ENCODE measurements at regions of chr2 and their contacts with region 1.

Region 1: GRCh38 chr2:46650556-46651001 is 171.2 kb downstream of the TMEM247 start:
- DNase-seq: peak; percentile 41 to 86 (median 70)
- ATAC-seq: peak; percentile 84
- H3K4me3 ChIP-seq: no peak overlapping the region
- H3K4me3 Mint-ChIP-seq: no peak overlapping the region
- H3K27ac ChIP-seq: no peak overlapping the region
- H3K27ac Mint-ChIP-seq: no peak overlapping the region
- H3K4me1 ChIP-seq: no peaks in the 10 kb centered on the region
- H3K4me1 Mint-ChIP-seq: no peaks in the 10 kb centered on the region
- H3K27me3 ChIP-seq: no peaks in the 10 kb centered on the region
- H3K27me3 Mint-ChIP-seq: no peaks in the 10 kb centered on the region
- CTCF ChIP-seq: peak; percentile 94

Region 2: DNA sequence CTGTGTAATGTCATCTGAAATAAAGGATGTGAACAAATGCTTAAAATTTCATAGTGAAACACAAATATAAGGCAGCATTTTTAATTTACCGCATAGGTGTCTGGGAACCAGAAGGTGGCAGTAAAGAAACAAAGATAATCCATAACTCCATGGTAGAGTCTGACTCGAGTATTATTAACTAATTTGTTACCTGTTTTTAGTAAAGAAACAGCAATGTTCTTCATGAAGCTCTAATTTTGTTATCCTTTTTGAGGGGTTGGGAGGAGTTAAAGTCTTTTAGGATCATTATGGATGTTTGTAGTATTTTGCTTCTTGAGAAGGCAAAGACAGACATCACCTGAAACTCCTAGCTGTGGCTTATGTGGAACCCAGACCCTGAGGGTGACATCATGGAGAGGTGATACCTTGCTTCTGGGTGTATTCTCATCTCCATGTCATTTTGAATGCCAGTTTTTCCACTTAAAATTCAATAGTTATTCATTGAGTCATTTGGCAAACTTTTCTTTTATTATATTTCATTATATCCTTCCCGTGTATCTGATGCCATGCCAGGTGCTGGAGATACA is 639.6 kb before region 1 on chr2:
- CTCF ChIA-PET with region 1: interaction called, 3 read pairs
- POLR2A ChIA-PET with region 1: no interaction called
- intact Hi-C with region 1: loop called in 1 of 2 experiments (anchors 5 kb)
- DNase-seq: peak in 2 of 9 experiments; percentile 28 to 50
- ATAC-seq: no peak
- H3K4me3 ChIP-seq: no peak overlapping the region
- H3K4me3 Mint-ChIP-seq: no peak overlapping the region
- H3K27ac ChIP-seq: no peak overlapping the region
- H3K27ac Mint-ChIP-seq: no peak overlapping the region
- H3K4me1 ChIP-seq: no peaks in the 10 kb centered on the region
- H3K4me1 Mint-ChIP-seq: no peaks in the 10 kb centered on the region
- H3K27me3 ChIP-seq: no peaks in the 10 kb centered on the region
- H3K27me3 Mint-ChIP-seq: no peaks in the 10 kb centered on the region
- CTCF ChIP-seq: peak; percentile 42

Region 3: GRCh38 chr2:46451131-46451711 is 199.4 kb before region 1 on chr2:
- CTCF ChIA-PET with region 1: interaction called, 10 read pairs
- POLR2A ChIA-PET with region 1: no interaction called
- intact Hi-C with region 1: no loop called
- DNase-seq: no peak
- ATAC-seq: no peak
- H3K4me3 ChIP-seq: no peak overlapping the region
- H3K4me3 Mint-ChIP-seq: no peak overlapping the region
- H3K27ac ChIP-seq: no peak overlapping the region
- H3K27ac Mint-ChIP-seq: no peak overlapping the region
- H3K4me1 ChIP-seq: no peaks in the 10 kb centered on the region
- H3K4me1 Mint-ChIP-seq: no peaks in the 10 kb centered on the region
- H3K27me3 ChIP-seq: no peaks in the 10 kb centered on the region
- H3K27me3 Mint-ChIP-seq: no peaks in the 10 kb centered on the region
- CTCF ChIP-seq: no peak

Region 4: GRCh38 chr2:46601328-46601963 is 49.1 kb before region 1 on chr2:
- CTCF ChIA-PET with region 1: interaction called, 4 read pairs
- POLR2A ChIA-PET with region 1: no interaction called
- intact Hi-C with region 1: loop called in 1 of 2 experiments (anchors 5 kb)
- DNase-seq: peak in 2 of 9 experiments; percentile 16 to 35
- ATAC-seq: no peak
- H3K4me3 ChIP-seq: no peak overlapping the region
- H3K4me3 Mint-ChIP-seq: no peak overlapping the region
- H3K27ac ChIP-seq: no peak overlapping the region
- H3K27ac Mint-ChIP-seq: no peak overlapping the region
- H3K4me1 ChIP-seq: no peaks in the 10 kb centered on the region
- H3K4me1 Mint-ChIP-seq: no peaks in the 10 kb centered on the region
- H3K27me3 ChIP-seq: no peaks in the 10 kb centered on the region
- H3K27me3 Mint-ChIP-seq: no peaks in the 10 kb centered on the region
- CTCF ChIP-seq: peak; percentile 56

Region 5: GRCh38 chr2:46769809-46770208 is 119.2 kb after region 1 on chr2:
- CTCF ChIA-PET with region 1: no interaction called
- POLR2A ChIA-PET with region 1: no interaction called
- intact Hi-C with region 1: no loop called
- DNase-seq: no peak
- ATAC-seq: no peak
- H3K4me3 ChIP-seq: no peak overlapping the region
- H3K4me3 Mint-ChIP-seq: no peak overlapping the region
- H3K27ac ChIP-seq: no peak overlapping the region
- H3K27ac Mint-ChIP-seq: no peak overlapping the region
- H3K4me1 ChIP-seq: no peaks in the 10 kb centered on the region
- H3K4me1 Mint-ChIP-seq: no peaks in the 10 kb centered on the region
- H3K27me3 ChIP-seq: no peaks in the 10 kb centered on the region
- H3K27me3 Mint-ChIP-seq: no peaks in the 10 kb centered on the region
- CTCF ChIP-seq: no peak

Region 6: GRCh38 chr2:46887028-46887885 is 236.7 kb after region 1 on chr2:
- CTCF ChIA-PET with region 1: interaction called, 6 read pairs
- POLR2A ChIA-PET with region 1: no interaction called
- intact Hi-C with region 1: loop called (anchors 2 kb)
- DNase-seq: no peak
- ATAC-seq: no peak
- H3K4me3 ChIP-seq: no peak overlapping the region
- H3K4me3 Mint-ChIP-seq: no peak overlapping the region
- H3K27ac ChIP-seq: no peak overlapping the region
- H3K27ac Mint-ChIP-seq: no peak overlapping the region
- H3K4me1 ChIP-seq: no peaks in the 10 kb centered on the region
- H3K4me1 Mint-ChIP-seq: peaks cover 2% of the 10 kb centered on the region
- H3K27me3 ChIP-seq: no peaks in the 10 kb centered on the region
- H3K27me3 Mint-ChIP-seq: peaks cover 2% of the 10 kb centered on the region
- CTCF ChIP-seq: no peak